HepG2 (cell line): ENCODE measurements at regions of chr3 and their contacts with region 1.

Region 1: DNA sequence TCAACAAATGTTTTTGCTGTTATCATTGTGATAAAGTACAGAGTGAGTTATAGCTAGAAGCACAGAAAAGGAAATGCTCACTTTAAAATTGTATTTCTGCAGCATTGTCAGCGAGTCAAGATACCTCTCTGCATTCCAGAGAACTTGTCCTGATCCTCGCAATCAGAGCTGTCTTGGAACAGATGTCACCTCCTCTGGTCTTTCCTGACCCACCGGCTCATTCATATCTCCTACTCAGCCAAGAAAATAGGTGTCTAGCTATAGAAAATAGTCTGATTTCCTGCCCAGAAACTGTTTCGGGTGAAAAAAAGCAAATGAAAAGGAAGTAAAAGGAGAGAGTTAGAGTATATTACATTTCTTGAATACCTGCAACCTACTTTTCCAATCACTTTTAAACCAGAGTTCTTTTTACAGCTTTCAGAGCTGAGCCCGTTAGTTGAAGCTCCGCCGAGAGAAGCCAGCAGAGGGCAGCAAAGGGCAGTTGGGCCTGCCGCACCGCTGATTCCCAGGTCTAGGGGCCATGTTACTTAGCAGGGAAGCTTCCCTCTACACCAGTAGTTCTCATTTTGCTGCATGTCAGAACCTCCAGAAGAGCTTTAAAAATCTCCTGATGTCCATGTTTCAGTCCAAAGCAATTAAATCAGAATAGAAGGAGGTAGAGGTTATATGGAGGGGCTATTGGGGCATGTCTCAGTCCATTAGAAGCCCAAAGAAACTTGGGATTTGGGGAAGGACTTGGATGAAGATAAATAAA is 185.7 kb upstream of the THRB start:
- DNase-seq: peak; percentile 29
- ATAC-seq: peak; percentile 94
- H3K4me3 ChIP-seq: no peak overlapping the region
- H3K27ac ChIP-seq: no peak overlapping the region
- H3K4me1 ChIP-seq: peaks cover 11% of the 10 kb centered on the region
- H3K27me3 ChIP-seq: no peaks in the 10 kb centered on the region; a peak in 1 of 5 replicates
- CTCF ChIP-seq: peak; percentile 77
- EP300 ChIP-seq: no peak
- POLR2A ChIP-seq: no peak
- RAD21 ChIP-seq: peak; percentile 39; the same call in 1 of the 2 replicates

Region 2: DNA sequence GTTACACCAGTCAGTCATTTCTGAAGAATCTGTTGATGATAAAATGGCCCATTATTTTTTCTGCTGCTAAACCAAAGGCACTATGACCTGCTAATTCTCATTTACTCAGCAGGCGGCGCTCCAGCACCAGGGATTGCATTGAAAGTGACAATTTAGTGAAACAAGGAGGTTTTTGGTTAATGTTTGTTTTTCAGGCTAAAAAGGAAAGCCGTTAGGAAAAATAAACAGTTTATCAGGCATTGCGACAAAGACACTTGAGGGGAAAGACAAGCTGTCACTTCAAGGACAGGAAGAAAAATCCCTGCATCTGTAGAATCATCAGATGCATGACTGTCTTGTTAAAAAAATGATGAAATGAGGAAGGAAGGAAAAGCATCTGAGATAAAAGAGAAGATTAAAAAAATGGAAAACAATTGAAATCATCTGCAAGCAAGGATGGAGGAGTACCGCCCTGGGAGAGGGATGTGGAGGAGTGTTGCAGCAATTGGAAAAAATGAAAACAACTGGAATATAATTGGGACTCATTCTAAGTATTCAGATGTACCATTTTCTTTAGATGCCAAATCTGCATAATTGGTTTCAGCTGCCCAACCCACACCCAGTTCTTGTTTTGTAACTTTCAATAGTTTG is 681.3 kb before region 1 on chr3:
- CTCF ChIA-PET with region 1: interaction called, 13 read pairs
- POLR2A ChIA-PET with region 1: no interaction called
- in situ Hi-C with region 1: loop called (anchors 25 kb)
- intact Hi-C with region 1: loop called (anchors 1 kb)
- DNase-seq: peak; percentile 45
- ATAC-seq: peak; percentile 53; the same call in 2 of the 3 replicates
- H3K4me3 ChIP-seq: no peak overlapping the region
- H3K27ac ChIP-seq: no peak overlapping the region
- H3K4me1 ChIP-seq: no peaks in the 10 kb centered on the region
- H3K27me3 ChIP-seq: peaks cover 0 to 18% of the 10 kb centered on the region in 2 experiments; a peak in 2 of 5 replicates
- CTCF ChIP-seq: peak; percentile 89
- EP300 ChIP-seq: no peak; a peak in 1 of 4 replicates
- POLR2A ChIP-seq: no peak
- RAD21 ChIP-seq: peak; percentile 84

Region 3: GRCh38 chr3:24069045-24069444 is 611.3 kb before region 1 on chr3:
- CTCF ChIA-PET with region 1: interaction called, 4 read pairs
- POLR2A ChIA-PET with region 1: no interaction called
- in situ Hi-C with region 1: no loop called
- intact Hi-C with region 1: loop called (anchors 2 kb)
- DNase-seq: peak; percentile 5
- ATAC-seq: no peak; the same call in 2 of the 3 replicates
- H3K4me3 ChIP-seq: no peak overlapping the region
- H3K27ac ChIP-seq: no peak overlapping the region
- H3K4me1 ChIP-seq: no peaks in the 10 kb centered on the region
- H3K27me3 ChIP-seq: no peaks in the 10 kb centered on the region; a peak in 2 of 5 replicates
- CTCF ChIP-seq: peak; percentile 58
- EP300 ChIP-seq: no peak
- POLR2A ChIP-seq: no peak
- RAD21 ChIP-seq: 0 out of 2 replicates have a peak, but pooled peaks have one; percentile 32

Region 4: DNA sequence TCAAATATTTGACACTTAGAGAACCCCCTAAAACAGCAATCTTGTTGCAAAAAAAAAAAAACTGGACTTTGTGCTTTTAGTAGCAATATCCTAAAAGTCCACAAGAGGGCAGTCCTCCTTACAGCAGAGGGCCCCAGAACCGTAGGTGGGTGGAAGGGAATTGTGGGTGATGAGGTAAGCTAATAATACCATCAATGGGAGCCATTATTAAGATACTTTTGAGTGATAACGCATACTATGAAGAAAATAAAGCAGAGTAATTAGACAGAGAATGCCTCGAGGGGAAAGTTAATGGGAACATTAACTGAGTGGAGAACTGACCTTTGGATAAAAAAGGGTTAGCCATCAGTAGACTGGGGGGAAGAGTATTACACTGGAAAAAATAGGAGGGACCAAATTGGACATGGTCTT is 415.6 kb before region 1 on chr3:
- CTCF ChIA-PET with region 1: interaction called, 3 read pairs
- POLR2A ChIA-PET with region 1: no interaction called
- in situ Hi-C with region 1: no loop called
- intact Hi-C with region 1: loop called (anchors 5 kb)
- DNase-seq: peak; percentile 53
- ATAC-seq: peak; percentile 73
- H3K4me3 ChIP-seq: no peak overlapping the region
- H3K27ac ChIP-seq: no peak overlapping the region
- H3K4me1 ChIP-seq: peaks cover 5% of the 10 kb centered on the region; the same call in 1 of the 2 replicates
- H3K27me3 ChIP-seq: no peaks in the 10 kb centered on the region
- CTCF ChIP-seq: peak; percentile 75
- EP300 ChIP-seq: no peak
- POLR2A ChIP-seq: no peak
- RAD21 ChIP-seq: peak; percentile 83

Region 5: GRCh38 chr3:24288496-24289236 is 391.7 kb before region 1 on chr3:
- CTCF ChIA-PET with region 1: no interaction called
- POLR2A ChIA-PET with region 1: no interaction called
- in situ Hi-C with region 1: no loop called
- intact Hi-C with region 1: no loop called
- DNase-seq: no peak
- ATAC-seq: no peak
- H3K4me3 ChIP-seq: no peak overlapping the region
- H3K27ac ChIP-seq: no peak overlapping the region
- H3K4me1 ChIP-seq: no peaks in the 10 kb centered on the region
- H3K27me3 ChIP-seq: no peaks in the 10 kb centered on the region
- CTCF ChIP-seq: no peak
- EP300 ChIP-seq: no peak
- POLR2A ChIP-seq: no peak
- RAD21 ChIP-seq: no peak

Region 6: GRCh38 chr3:24773798-24774197 is 93.4 kb after region 1 on chr3:
- CTCF ChIA-PET with region 1: no interaction called
- POLR2A ChIA-PET with region 1: no interaction called
- in situ Hi-C with region 1: no loop called
- intact Hi-C with region 1: no loop called
- DNase-seq: peak; percentile 49
- ATAC-seq: peak; percentile 95
- H3K4me3 ChIP-seq: no peak overlapping the region
- H3K27ac ChIP-seq: no peak overlapping the region
- H3K4me1 ChIP-seq: no peaks in the 10 kb centered on the region
- H3K27me3 ChIP-seq: no peaks in the 10 kb centered on the region
- CTCF ChIP-seq: peak; percentile 79
- EP300 ChIP-seq: no peak
- POLR2A ChIP-seq: no peak
- RAD21 ChIP-seq: no peak

Region 7: GRCh38 chr3:25594007-25594502 is 913.7 kb after region 1 on chr3:
- CTCF ChIA-PET with region 1: no interaction called
- POLR2A ChIA-PET with region 1: no interaction called
- in situ Hi-C with region 1: no loop called
- intact Hi-C with region 1: loop called (anchors 10 kb)
- DNase-seq: peak; percentile 30
- ATAC-seq: peak; percentile 18; the same call in 2 of the 3 replicates
- H3K4me3 ChIP-seq: no peak overlapping the region
- H3K27ac ChIP-seq: no peak overlapping the region
- H3K4me1 ChIP-seq: peaks cover 19% of the 10 kb centered on the region
- H3K27me3 ChIP-seq: no peaks in the 10 kb centered on the region
- CTCF ChIP-seq: peak; percentile 46
- EP300 ChIP-seq: no peak
- POLR2A ChIP-seq: no peak
- RAD21 ChIP-seq: 0 out of 2 replicates have a peak, but pooled peaks have one; percentile 30